GM12878 (cell line): ENCODE measurements at regions of chr3 and their contacts with region 1.

Region 1: GRCh38 chr3:71875461-71875947 is 90.6 kb upstream of the PROK2 start:
- DNase-seq: peak; percentile 50
- ATAC-seq: peak; percentile 98
- H3K4me3 ChIP-seq: no peak overlapping the region
- H3K27ac ChIP-seq: no peak overlapping the region
- H3K4me1 ChIP-seq: peaks cover 19% of the 10 kb centered on the region
- H3K27me3 ChIP-seq: no peaks in the 10 kb centered on the region
- CTCF ChIP-seq: peak; percentile 91 to 96 (median 96); a peak in 5 of 6 replicates
- EP300 ChIP-seq: no peak; a peak in 1 of 4 replicates
- POLR2A ChIP-seq: no peak
- RAD21 ChIP-seq: peak; percentile 93

Region 2: GRCh38 chr3:71657831-71658530 is 217.5 kb before region 1 on chr3:
- CTCF ChIA-PET with region 1: no interaction called
- POLR2A ChIA-PET with region 1: no interaction called
- RAD21 ChIA-PET with region 1: no interaction called
- SMC1A ChIA-PET with region 1: no interaction called
- in situ Hi-C with region 1: no loop called
- intact Hi-C with region 1: no loop called
- DNase-seq: no peak
- ATAC-seq: no peak
- H3K4me3 ChIP-seq: no peak overlapping the region
- H3K27ac ChIP-seq: no peak overlapping the region
- H3K4me1 ChIP-seq: no peaks in the 10 kb centered on the region
- H3K27me3 ChIP-seq: peaks cover 0 to 2% of the 10 kb centered on the region in 2 experiments; a peak in 3 of 4 replicates
- CTCF ChIP-seq: no peak
- EP300 ChIP-seq: no peak
- POLR2A ChIP-seq: no peak
- RAD21 ChIP-seq: no peak

Region 3: DNA sequence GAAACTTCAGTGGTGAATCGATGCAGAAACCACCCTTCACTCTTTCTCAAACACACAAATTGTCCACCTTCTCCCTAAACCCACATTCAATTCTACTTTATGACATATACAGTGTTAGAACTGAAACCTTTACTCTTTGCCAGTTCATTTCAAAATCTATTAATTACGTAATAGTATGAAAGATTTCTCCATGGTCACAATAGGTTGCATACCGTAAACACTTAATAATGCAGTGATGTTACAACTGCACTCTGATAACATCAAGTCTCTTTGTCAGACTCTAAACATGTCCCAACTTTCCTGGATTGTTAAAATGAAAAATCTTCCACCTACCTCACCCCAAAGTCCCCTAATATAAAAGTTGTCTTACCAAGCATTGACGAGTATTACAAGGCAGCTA is 21.2 kb after region 1 on chr3:
- CTCF ChIA-PET with region 1: interaction called, 22 read pairs
- POLR2A ChIA-PET with region 1: no interaction called
- RAD21 ChIA-PET with region 1: no interaction called
- SMC1A ChIA-PET with region 1: interaction called, 4 read pairs
- in situ Hi-C with region 1: no loop called
- intact Hi-C with region 1: no loop called
- DNase-seq: no peak
- ATAC-seq: no peak
- H3K4me3 ChIP-seq: no peak overlapping the region
- H3K27ac ChIP-seq: no peak overlapping the region
- H3K4me1 ChIP-seq: no peaks in the 10 kb centered on the region
- H3K27me3 ChIP-seq: no peaks in the 10 kb centered on the region
- CTCF ChIP-seq: no peak
- EP300 ChIP-seq: no peak
- POLR2A ChIP-seq: no peak
- RAD21 ChIP-seq: no peak

Region 4: GRCh38 chr3:71955240-71956068 is 80.0 kb after region 1 on chr3:
- CTCF ChIA-PET with region 1: interaction called, 7 read pairs
- POLR2A ChIA-PET with region 1: no interaction called
- RAD21 ChIA-PET with region 1: interaction called, 5 read pairs
- SMC1A ChIA-PET with region 1: interaction called, 3 read pairs
- in situ Hi-C with region 1: no loop called
- intact Hi-C with region 1: loop called (anchors 2 kb)
- DNase-seq: peak; percentile 61
- ATAC-seq: peak; percentile 81
- H3K4me3 ChIP-seq: no peak overlapping the region
- H3K27ac ChIP-seq: no peak overlapping the region
- H3K4me1 ChIP-seq: peaks cover 22% of the 10 kb centered on the region
- H3K27me3 ChIP-seq: no peaks in the 10 kb centered on the region
- CTCF ChIP-seq: peak; percentile 46 to 81 (median 67); a peak in 5 of 6 replicates
- EP300 ChIP-seq: no peak
- POLR2A ChIP-seq: no peak
- RAD21 ChIP-seq: peak; percentile 85

Region 5: GRCh38 chr3:72177083-72178050 is 301.9 kb after region 1 on chr3:
- CTCF ChIA-PET with region 1: no interaction called
- POLR2A ChIA-PET with region 1: no interaction called
- RAD21 ChIA-PET with region 1: no interaction called
- SMC1A ChIA-PET with region 1: no interaction called
- in situ Hi-C with region 1: no loop called
- intact Hi-C with region 1: loop called (anchors 5 kb)
- DNase-seq: no peak
- ATAC-seq: peak; percentile 64
- H3K4me3 ChIP-seq: peak overlapping the region; percentile 39
- H3K27ac ChIP-seq: peak overlapping the region; percentile 85
- H3K4me1 ChIP-seq: peaks cover 29% of the 10 kb centered on the region
- H3K27me3 ChIP-seq: no peaks in the 10 kb centered on the region
- CTCF ChIP-seq: no peak
- EP300 ChIP-seq: peak; percentile 21 to 40; a peak in 2 of 4 replicates
- POLR2A ChIP-seq: no peak
- RAD21 ChIP-seq: no peak

Region 6: DNA sequence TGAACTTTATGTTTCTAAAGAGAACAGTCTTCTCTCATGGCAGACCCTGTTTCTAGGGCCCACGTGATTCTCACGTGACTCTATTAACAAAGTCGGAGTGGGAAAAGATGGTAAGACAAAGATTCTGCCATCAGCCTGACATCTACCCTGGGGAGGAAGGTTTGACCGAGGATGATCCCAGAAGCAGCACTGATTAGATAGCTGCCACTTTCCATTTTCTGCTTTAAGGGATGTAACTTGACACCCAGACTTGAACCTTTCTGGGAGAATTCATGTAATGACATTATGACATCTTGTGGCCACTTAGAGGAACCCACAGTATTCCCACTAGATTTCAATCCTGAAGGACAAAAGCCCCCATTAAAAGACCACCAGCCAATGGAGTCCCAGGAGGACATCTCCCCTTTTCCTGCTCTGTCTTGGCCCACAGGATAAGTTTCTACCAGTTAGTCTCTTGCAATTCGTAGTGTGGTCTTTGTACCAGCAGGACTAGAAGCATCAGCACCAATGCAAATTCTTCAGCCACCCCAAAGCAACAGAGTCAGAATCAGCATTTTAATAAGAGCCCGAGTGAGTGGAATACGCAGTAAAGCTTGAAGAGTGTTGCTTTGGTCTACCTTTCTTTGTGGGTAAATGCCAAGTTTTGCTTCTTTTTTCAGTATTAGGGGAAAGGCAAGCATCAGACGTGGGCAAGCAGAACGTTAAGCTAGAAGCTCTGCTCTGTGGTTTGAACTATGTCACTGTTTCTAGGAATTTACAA is 389.9 kb after region 1 on chr3:
- CTCF ChIA-PET with region 1: interaction called, 18 read pairs
- POLR2A ChIA-PET with region 1: no interaction called
- RAD21 ChIA-PET with region 1: interaction called, 14 read pairs
- SMC1A ChIA-PET with region 1: interaction called, 14 read pairs
- in situ Hi-C with region 1: no loop called
- intact Hi-C with region 1: loop called (anchors 1 kb)
- DNase-seq: no peak
- ATAC-seq: peak; percentile 57
- H3K4me3 ChIP-seq: no peak overlapping the region
- H3K27ac ChIP-seq: no peak overlapping the region
- H3K4me1 ChIP-seq: peaks cover 43% of the 10 kb centered on the region
- H3K27me3 ChIP-seq: no peaks in the 10 kb centered on the region
- CTCF ChIP-seq: peak; percentile 3 to 35 (median 23); a peak in 2 of 6 replicates
- EP300 ChIP-seq: no peak
- POLR2A ChIP-seq: no peak
- RAD21 ChIP-seq: peak; percentile 62

Region 7: GRCh38 chr3:72679540-72680198 is 804.2 kb after region 1 on chr3:
- CTCF ChIA-PET with region 1: no interaction called
- POLR2A ChIA-PET with region 1: no interaction called
- RAD21 ChIA-PET with region 1: no interaction called
- SMC1A ChIA-PET with region 1: no interaction called
- in situ Hi-C with region 1: no loop called
- intact Hi-C with region 1: loop called (anchors 10 kb)
- DNase-seq: no peak
- ATAC-seq: peak; percentile 32
- H3K4me3 ChIP-seq: no peak overlapping the region
- H3K27ac ChIP-seq: no peak overlapping the region
- H3K4me1 ChIP-seq: peaks cover 39% of the 10 kb centered on the region
- H3K27me3 ChIP-seq: no peaks in the 10 kb centered on the region
- CTCF ChIP-seq: no peak
- EP300 ChIP-seq: peak; percentile 20 to 49; a peak in 2 of 4 replicates
- POLR2A ChIP-seq: no peak
- RAD21 ChIP-seq: no peak